AG04449 (cell line): ENCODE measurements at regions of chr11 and their contacts with region 1.

Region 1: GRCh38 chr11:86608251-86608799 is 64.1 kb downstream of the ME3 start:
- DNase-seq: no peak
- H3K4me3 ChIP-seq: no peak overlapping the region
- CTCF ChIP-seq: peak; percentile 75

Region 2: GRCh38 chr11:86456052-86456939 is 152.0 kb before region 1 on chr11:
- CTCF ChIA-PET with region 1: interaction called, 83 read pairs
- POLR2A ChIA-PET with region 1: no interaction called
- DNase-seq: no peak
- H3K4me3 ChIP-seq: no peak overlapping the region
- CTCF ChIP-seq: peak; percentile 83

Region 3: GRCh38 chr11:86579406-86579731 is 29.0 kb before region 1 on chr11:
- CTCF ChIA-PET with region 1: interaction called, 14 read pairs
- POLR2A ChIA-PET with region 1: no interaction called
- DNase-seq: no peak
- H3K4me3 ChIP-seq: no peak overlapping the region
- CTCF ChIP-seq: no peak

Region 4: DNA sequence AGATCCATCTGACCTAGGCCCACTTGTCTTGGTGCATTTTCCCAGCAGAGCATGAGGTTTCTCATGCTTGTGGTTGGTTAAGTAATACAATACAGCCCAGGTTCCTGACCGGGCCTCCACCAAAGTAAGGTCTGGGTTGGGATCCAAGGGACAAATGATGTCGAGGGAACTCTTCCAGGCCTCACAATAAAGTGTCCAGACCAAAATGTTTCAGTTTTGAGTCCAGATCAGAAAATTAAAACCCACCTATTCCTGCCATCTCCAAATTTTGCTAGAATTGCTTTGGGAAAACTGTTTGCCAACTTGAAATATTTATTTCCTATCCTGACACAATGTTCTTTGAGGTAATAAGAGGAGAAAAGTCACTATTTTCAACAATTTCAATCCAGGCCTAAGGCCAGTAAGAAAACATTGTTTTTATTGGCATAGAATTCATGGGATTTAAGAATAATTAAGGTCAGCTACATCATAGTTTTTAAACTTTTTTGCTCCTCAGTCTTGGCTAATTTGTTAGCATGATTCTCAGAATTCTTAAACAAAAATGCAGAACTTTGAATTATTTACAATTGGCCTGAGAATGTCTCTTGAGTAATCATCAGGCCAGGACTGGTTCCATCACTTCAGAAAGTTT is 12.7 kb after region 1 on chr11:
- CTCF ChIA-PET with region 1: interaction called, 65 read pairs
- POLR2A ChIA-PET with region 1: no interaction called
- DNase-seq: no peak
- H3K4me3 ChIP-seq: no peak overlapping the region
- CTCF ChIP-seq: no peak

Region 5: DNA sequence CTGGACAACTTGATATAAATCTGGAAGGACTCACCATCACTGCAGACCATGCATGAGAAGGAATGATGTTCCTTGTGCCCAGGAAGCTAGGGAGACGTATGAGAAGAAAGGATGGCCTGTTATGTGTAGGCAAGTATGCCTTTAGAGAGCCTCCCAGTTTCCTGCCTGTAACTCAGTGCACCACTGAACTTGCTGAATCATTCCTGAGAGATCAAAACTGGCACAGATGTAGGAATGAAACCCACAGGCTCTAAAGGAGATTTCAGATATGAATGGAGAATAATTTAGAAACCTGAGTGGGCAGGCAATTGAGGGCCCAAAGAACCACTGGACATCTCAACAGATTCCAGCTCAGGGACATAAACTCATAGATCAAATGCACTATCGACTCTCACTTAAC is 153.7 kb after region 1 on chr11:
- CTCF ChIA-PET with region 1: interaction called, 13 read pairs
- POLR2A ChIA-PET with region 1: no interaction called
- DNase-seq: no peak
- H3K4me3 ChIP-seq: no peak overlapping the region
- CTCF ChIP-seq: no peak

Region 6: DNA sequence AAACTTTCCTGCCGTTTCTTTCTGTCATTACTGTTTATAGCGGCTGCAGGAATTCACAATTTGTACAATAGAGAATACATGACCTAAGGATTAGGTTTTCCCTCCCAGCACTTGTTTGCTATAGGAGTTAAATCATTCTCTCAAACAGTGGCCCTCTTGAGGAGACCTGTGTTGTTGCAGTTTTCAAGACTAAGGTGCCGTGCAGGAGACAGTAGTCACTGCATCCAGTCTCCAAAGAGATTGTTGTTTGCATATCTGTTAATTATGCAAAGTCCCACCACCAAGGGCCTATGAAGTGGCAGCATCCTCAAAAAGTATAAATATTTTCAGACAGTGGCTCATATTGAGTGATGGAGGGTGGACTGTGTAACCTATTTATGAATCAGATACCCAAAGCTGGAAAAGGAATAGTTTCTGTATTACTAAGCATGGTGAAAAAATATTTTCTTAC is 194.3 kb after region 1 on chr11:
- CTCF ChIA-PET with region 1: interaction called, 51 read pairs
- POLR2A ChIA-PET with region 1: no interaction called
- DNase-seq: no peak
- H3K4me3 ChIP-seq: peak overlapping the region; percentile 82
- CTCF ChIP-seq: peak; percentile 51

Region 7: DNA sequence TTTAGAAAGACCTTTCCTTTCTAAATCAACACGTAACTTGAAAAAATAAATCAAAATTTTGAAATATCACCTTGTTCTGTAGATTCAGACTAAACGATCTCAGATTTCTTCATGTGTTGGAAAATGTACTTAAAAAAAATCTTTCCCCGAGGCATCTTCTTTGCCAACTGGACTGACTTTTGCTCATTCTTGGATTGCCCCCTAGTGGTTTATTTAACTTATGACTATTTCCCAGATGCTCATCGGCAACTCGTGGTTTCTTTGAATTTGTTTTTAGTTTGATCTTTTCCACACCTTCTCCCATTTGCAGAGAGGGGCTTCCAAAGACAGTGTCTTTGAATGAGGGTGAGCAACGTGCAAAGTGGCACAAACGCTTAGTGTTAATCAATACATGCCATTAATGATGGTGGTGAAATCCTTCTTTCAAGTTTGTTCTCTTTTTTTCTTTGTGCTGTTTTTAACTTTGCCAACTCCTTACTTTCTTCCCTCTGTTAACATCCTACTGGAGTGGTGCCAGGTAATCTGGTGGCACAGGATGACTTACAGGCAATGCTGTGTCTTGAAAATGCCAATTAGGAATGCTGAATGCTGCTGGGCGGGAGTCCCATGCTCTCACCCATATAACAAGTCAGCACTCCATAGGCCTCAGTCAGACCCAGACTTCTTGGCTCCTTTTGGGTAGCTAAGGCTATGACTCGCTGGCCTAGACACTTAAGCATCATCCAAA is 210.3 kb after region 1 on chr11:
- CTCF ChIA-PET with region 1: interaction called, 17 read pairs
- POLR2A ChIA-PET with region 1: no interaction called
- DNase-seq: peak; percentile 53
- H3K4me3 ChIP-seq: no peak overlapping the region
- CTCF ChIP-seq: peak; percentile 23